ENCODE measurements at regions of chr16 and their contacts with region 1.

Region 1: DNA sequence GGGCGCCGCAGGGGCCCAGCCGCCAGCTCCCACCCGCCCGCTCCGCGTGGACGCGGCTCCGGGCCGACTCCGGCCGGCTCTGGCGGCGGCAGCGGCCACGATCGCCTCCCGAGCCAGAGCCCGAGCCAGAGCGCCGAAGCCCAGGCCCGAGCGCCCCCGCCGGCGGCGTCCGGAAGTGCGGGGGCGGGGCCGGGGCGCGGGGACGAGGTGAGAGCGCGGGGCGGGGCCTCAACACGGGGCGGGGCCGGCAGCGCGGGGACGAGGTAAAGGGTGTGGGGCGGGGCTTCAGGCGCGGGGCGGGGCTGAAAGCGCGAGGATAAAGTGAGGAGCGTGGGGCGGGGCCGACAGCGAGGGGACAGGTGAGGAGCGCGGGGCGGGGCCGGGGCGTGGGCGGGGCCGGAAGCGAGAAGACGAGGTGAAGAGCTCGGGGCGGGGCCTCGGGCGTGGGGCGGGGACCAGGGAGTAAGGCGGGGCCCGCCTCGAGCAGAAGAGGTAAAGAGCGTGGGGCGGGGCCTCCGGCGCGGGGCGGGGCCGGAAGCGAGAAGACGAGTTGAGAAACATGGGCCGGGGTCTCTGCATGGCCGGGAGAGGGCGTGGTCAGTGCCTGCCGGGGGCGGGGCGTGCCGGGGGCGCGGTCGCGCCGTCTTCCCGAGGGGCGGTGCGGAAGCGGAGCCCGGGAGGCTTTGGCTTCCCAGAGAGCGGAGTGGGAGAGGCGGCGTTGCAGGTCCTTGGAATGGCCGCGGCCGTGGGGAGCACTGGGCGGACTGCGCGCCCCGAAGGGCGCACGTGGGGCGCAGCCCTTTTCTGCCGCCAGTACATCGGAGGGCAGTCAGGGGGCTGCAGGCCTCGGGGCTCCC is at the start of gene AXIN1:
- DNase-seq: peak; percentile 99
- H3K4me3 ChIP-seq: peak within 1 kb of the TSS; percentile 66
- H3K4me3 Mint-ChIP-seq: peak within 1 kb of the TSS; percentile 74
- H3K27ac Mint-ChIP-seq: no peak within 1 kb of the TSS
- H3K4me1 ChIP-seq: peaks cover 9% of the 10 kb centered on the region; the same call in 1 of the 2 replicates
- H3K4me1 Mint-ChIP-seq: no peaks in the 10 kb centered on the region
- H3K27me3 ChIP-seq: no peaks in the 10 kb centered on the region
- H3K27me3 Mint-ChIP-seq: no peaks in the 10 kb centered on the region
- CTCF ChIP-seq: peak; percentile 24 to 40
- total RNA-seq, gene AXIN1: 29.7 and 34.5 TPM in 2 replicates

Region 2: GRCh38 chr16:138049-138417 is 214.7 kb before region 1 on chr16:
- CTCF ChIA-PET with region 1: no interaction called
- POLR2A ChIA-PET with region 1: interaction called, 10 read pairs
- intact Hi-C with region 1: no loop called
- DNase-seq: peak; percentile 45 to 49
- H3K4me3 ChIP-seq: peak overlapping the region; percentile 79
- H3K4me3 Mint-ChIP-seq: peak overlapping the region; percentile 89
- H3K27ac Mint-ChIP-seq: peak overlapping the region; percentile 67
- H3K4me1 ChIP-seq: no peaks in the 10 kb centered on the region
- H3K4me1 Mint-ChIP-seq: no peaks in the 10 kb centered on the region
- H3K27me3 ChIP-seq: no peaks in the 10 kb centered on the region
- H3K27me3 Mint-ChIP-seq: no peaks in the 10 kb centered on the region
- CTCF ChIP-seq: no peak

Region 3: DNA sequence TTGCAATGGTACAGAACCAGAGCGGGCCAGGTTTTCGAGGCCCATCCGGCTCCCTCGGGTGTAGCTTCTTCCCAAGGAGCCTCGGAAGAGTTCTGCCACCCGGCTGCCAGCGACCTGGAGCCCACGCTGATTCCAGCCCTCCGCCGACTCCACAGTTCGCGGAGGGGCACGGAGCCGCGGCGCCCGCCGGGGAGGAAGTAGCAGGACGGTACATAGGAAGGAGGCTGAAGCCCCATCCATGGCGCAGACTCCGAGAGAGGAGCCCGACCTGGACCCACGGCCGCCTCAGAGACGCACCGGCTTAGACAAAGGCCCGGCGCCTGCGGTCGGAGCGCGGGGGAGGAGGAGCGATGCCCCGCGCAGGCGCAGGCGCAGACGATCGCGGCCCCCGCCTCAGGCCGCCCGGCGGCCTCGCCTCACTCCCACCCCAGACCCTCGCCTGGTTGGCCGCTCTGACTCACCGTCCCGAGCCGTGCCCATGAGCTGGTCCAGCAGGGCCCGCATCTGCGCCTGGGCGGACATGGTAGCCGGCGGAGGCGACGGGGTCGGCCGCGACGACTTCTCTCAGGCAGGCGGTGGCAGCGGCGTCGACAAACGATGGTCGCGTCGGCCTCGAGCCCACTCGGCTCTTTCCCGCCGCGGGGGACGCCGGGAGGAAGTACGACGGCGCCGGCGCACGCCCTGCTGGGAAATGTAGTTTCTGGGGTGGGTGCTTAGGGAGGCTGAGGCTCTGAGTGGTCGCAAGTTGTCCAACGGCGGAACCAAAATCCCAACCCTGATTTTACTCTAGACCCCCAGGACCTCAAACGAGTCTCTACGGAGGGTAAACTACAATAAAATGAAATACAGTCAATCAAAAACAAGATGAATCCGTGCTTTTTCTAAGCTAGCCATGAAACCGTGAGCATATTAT is 123.7 kb before region 1 on chr16 and contains the start of gene LUC7L:
- CTCF ChIA-PET with region 1: interaction called, 16 read pairs
- POLR2A ChIA-PET with region 1: interaction called, 8 read pairs
- intact Hi-C with region 1: loop called (anchors 5 kb)
- DNase-seq: peak; percentile 82 to 91
- H3K4me3 ChIP-seq: peak within 1 kb of the TSS; percentile 93
- H3K4me3 Mint-ChIP-seq: peak within 1 kb of the TSS; percentile 90
- H3K27ac Mint-ChIP-seq: peak within 1 kb of the TSS; percentile 90
- H3K4me1 ChIP-seq: no peaks in the 10 kb centered on the region
- H3K4me1 Mint-ChIP-seq: peaks cover 6% of the 10 kb centered on the region
- H3K27me3 ChIP-seq: no peaks in the 10 kb centered on the region
- H3K27me3 Mint-ChIP-seq: no peaks in the 10 kb centered on the region
- CTCF ChIP-seq: no peak
- total RNA-seq, gene LUC7L: 80.7 and 86.1 TPM in 2 replicates

Region 4: GRCh38 chr16:234468-235305 is 118.1 kb before region 1 on chr16 and contains the start of gene FAM234A:
- CTCF ChIA-PET with region 1: interaction called, 16 read pairs
- POLR2A ChIA-PET with region 1: interaction called, 19 read pairs
- intact Hi-C with region 1: loop called (anchors 5 kb)
- DNase-seq: peak; percentile 93 to 96
- H3K4me3 ChIP-seq: peak within 1 kb of the TSS; percentile 53
- H3K4me3 Mint-ChIP-seq: peak within 1 kb of the TSS; percentile 76
- H3K27ac Mint-ChIP-seq: peak within 1 kb of the TSS; percentile 92
- H3K4me1 ChIP-seq: no peaks in the 10 kb centered on the region
- H3K4me1 Mint-ChIP-seq: no peaks in the 10 kb centered on the region
- H3K27me3 ChIP-seq: no peaks in the 10 kb centered on the region
- H3K27me3 Mint-ChIP-seq: no peaks in the 10 kb centered on the region
- CTCF ChIP-seq: peak; percentile 41 to 43
- total RNA-seq, gene FAM234A: 71.7 and 77.7 TPM in 2 replicates

Region 5: DNA sequence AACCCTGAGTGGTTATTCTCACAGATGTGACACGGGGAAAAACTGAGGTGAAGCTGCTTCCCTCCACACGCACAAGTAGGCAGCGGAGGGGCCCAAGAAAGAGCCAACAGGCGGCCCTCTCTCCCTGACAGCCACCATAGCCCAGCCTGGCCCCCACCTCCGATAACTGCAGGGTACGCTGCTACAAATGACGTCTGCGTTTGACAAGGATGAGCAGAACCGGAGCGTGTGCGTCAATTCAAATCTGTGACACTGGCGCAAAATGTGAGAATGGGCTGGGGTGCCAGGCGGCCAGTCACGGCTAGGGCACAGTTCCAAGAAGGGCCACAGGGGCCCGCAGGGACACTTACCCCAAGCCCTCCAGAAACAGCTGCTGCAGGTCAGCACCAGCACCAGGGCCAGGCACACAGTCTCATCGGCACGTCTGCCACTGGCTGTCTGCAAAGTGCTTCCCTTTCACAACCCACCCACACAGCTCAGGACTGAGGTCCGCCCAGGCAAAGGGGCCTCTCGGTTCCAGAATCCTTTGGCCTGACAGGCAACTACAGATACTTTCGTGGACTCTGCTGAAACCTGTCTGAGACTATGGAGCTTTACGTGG is 14.7 kb before region 1 on chr16:
- CTCF ChIA-PET with region 1: interaction called, 10 read pairs
- POLR2A ChIA-PET with region 1: no interaction called
- intact Hi-C with region 1: no loop called
- DNase-seq: no peak
- H3K4me3 ChIP-seq: no peak overlapping the region
- H3K4me3 Mint-ChIP-seq: no peak overlapping the region
- H3K27ac Mint-ChIP-seq: no peak overlapping the region
- H3K4me1 ChIP-seq: peaks cover 16% of the 10 kb centered on the region; the same call in 1 of the 2 replicates
- H3K4me1 Mint-ChIP-seq: peaks cover 24% of the 10 kb centered on the region
- H3K27me3 ChIP-seq: no peaks in the 10 kb centered on the region
- H3K27me3 Mint-ChIP-seq: no peaks in the 10 kb centered on the region
- CTCF ChIP-seq: no peak

Measured in Caco-2 (cell line).